HAP-1 (cell line): ENCODE measurements at regions of chr10 and their contacts with region 1.

Region 1: DNA sequence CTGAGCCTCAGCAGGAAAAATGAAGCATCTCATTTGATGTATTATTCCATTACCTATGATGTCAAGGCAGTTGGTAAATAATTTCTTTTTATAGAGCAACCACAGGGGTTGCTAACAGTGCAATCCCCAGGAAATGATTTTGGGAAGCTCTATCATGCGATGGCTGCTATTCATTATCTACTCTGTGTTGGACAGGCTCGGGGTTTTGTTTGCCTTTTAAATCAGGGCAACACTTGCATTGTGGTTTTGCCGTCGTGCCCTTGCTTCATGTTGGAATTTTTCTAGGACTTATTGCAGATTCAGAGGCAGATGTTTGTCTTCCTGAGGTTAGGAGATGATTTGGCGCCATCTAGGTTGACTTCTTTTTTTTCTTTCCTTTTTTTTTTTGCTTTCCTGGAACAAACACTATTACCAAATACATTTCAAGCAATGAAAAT is 128.4 kb downstream of the BICC1 start:
- DNase-seq: peak; percentile 39 to 57
- H3K4me3 ChIP-seq: no peak overlapping the region
- H3K4me1 ChIP-seq: peaks cover 21% of the 10 kb centered on the region
- H3K27me3 ChIP-seq: no peaks in the 10 kb centered on the region

Region 2: GRCh38 chr10:58414270-58415041 is 226.7 kb before region 1 on chr10:
- in situ Hi-C with region 1: loop called (anchors 25 kb)
- DNase-seq: no peak
- H3K4me3 ChIP-seq: no peak overlapping the region
- H3K4me1 ChIP-seq: no peaks in the 10 kb centered on the region
- H3K27me3 ChIP-seq: no peaks in the 10 kb centered on the region

Region 3: DNA sequence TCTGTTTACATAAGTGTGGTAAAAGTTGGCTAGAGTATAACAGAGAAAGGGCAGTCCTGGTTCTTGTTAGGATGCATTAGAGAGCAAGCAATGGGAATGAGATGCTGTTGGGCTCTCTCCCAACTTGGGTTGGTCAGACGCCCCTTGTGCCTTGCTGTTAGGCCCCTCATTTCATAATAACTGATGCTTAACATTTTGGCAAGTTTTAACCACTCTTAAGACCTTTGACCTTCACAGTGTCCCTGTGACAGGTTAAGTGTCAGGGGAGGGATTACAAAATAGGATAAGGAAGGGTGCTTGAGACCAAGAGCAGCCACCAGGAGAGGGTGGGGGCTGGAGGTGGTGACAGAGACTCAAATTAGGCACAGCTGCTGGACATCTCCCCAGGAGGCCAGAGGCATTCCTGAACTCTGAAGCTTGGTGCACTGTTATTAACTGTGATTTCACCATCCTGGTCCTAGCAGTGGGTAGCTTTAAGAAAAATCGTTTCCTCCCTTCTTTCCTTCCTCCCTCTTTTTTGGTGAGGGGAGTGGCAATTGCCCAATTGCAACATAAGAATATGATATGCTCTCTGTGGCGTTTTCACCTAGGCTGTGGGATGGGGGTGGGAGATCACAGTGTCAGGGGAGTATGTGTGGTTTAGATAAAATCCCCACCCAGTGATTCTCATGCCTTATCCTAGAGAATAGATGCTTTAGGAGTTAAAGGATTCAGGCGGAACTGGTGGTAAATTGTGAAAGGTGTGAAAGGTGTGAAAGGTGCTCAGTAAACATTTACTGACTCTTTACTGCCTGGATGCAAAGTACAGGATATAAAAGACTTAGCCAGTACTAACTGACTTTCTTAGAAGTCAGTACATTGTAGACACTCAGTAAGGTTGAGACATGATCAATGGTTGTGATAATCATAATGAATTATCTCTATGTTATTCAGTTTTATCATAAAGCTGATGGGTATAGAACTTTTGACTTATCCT is 142.1 kb after region 1 on chr10:
- in situ Hi-C with region 1: no loop called
- DNase-seq: no peak
- H3K4me3 ChIP-seq: no peak overlapping the region
- H3K4me1 ChIP-seq: no peaks in the 10 kb centered on the region
- H3K27me3 ChIP-seq: no peaks in the 10 kb centered on the region